ENCODE measurements at regions of chr1 and their contacts with region 1.

Region 1: GRCh38 chr1:226547754-226548191 is 791 bp upstream of the STUM start:
- DNase-seq: peak; percentile 82 to 90 (median 84)
- H3K4me3 ChIP-seq: peak overlapping the region; percentile 61
- H3K27ac ChIP-seq: no peak overlapping the region
- H3K4me1 ChIP-seq: peaks cover 5% of the 10 kb centered on the region
- H3K27me3 ChIP-seq: no peaks in the 10 kb centered on the region
- CTCF ChIP-seq: peak; percentile 81 to 88 (median 86)
- EP300 ChIP-seq: no peak
- POLR2A ChIP-seq: no peak

Region 2: DNA sequence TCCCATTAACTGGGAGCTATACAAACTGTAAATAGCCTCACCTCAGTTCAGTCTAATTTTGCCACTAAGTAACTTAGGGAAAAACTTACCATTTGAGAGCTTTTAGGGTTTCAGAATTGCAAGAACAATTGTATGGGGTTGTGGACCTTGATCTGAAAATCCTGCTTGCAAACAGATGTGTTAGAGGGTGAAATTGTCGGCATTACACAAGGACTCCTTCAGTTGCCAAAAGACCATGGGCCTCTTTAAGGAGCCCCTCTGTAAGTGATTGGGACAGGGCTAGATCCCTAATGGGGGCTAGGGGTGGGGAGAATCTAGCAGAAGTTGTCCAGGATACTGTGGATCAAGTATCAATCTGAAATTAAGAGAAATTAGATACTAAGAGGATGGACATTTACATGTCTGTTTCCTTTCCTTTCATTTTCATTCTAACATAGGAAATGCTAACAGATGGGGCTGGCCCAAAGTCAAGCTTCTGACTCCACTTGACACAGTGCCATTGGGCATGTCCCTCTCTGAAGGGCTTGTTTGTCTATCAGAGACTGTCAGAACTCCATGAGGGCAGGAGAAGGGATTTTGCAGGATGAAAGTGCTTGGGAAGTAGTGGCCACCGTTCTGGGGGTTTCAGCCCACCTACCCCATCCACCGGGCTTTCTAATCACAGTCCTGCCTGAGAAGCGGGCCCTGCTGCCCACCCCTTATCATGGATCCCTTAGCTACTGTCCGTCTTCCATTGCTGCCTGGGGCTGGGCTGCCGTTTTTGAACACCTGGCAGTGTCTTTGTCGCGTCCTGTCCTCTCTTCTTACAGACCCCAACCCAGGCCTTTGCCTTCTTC is 55.5 kb after region 1 on chr1:
- intact Hi-C with region 1: loop called in 3 of 4 experiments (anchors 5 kb)
- DNase-seq: peak in 4 of 5 donors; percentile 49 to 75 (median 58)
- H3K4me3 ChIP-seq: no peak overlapping the region
- H3K27ac ChIP-seq: peak overlapping the region in 1 of 2 donors; percentile 75
- H3K4me1 ChIP-seq: peaks cover 16% of the 10 kb centered on the region
- H3K27me3 ChIP-seq: no peaks in the 10 kb centered on the region
- CTCF ChIP-seq: no peak
- EP300 ChIP-seq: no peak
- POLR2A ChIP-seq: no peak

Region 3: DNA sequence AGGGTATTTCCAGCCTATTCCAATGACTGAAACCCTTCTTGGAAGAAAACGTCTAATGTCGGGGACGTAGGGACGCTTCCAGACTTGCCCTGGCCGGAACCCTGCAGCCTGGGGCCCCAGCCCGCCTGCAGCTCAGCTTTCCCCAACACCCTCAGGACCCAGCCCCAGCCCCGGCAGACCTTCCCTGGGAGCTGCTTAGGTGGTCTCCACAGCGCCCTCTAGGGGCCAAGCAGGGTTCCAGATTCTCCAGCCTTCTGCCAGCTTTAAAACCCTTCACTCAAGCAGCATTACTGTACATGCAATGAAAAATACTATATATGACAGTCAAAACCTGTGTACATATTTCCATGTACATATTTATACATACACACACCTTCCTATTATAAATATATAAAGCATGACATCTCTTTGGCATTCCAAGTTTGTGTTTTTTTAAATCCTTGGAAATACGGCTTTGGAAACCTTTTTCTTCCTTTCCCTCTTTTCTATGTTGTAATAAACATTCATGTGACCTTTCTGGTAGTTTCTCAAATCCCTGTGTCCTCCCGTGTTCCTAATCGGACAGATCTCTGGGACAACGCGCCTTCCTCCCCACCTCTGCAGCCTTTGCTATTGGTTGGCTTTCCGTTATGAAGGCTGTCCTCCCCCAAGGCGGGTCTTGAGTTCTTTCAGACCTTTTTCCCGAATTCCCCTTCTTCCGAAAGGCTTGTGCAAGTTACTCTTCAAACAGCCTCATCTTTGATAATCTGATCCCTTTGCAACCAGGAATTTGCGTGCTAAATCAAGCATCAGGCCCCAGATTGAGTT is 61.1 kb after region 1 on chr1:
- intact Hi-C with region 1: loop called (anchors 5 kb)
- DNase-seq: peak in 4 of 5 donors; percentile 59 to 74 (median 68)
- H3K4me3 ChIP-seq: no peak overlapping the region
- H3K27ac ChIP-seq: no peak overlapping the region
- H3K4me1 ChIP-seq: peaks cover 9% of the 10 kb centered on the region
- H3K27me3 ChIP-seq: no peaks in the 10 kb centered on the region
- CTCF ChIP-seq: peak; percentile 35 to 61 (median 51)
- EP300 ChIP-seq: no peak
- POLR2A ChIP-seq: no peak

Region 4: GRCh38 chr1:226634166-226634588 is 86.4 kb after region 1 on chr1:
- intact Hi-C with region 1: loop called in 1 of 4 experiments (anchors 5 kb)
- DNase-seq: peak; percentile 76 to 90 (median 87)
- H3K4me3 ChIP-seq: no peak overlapping the region
- H3K27ac ChIP-seq: no peak overlapping the region
- H3K4me1 ChIP-seq: peaks cover 4% of the 10 kb centered on the region
- H3K27me3 ChIP-seq: no peaks in the 10 kb centered on the region
- CTCF ChIP-seq: peak; percentile 82 to 90 (median 88)
- EP300 ChIP-seq: no peak
- POLR2A ChIP-seq: no peak

Region 5: GRCh38 chr1:226827968-226828513 is 280.3 kb after region 1 on chr1:
- intact Hi-C with region 1: loop called (anchors 5 to 10 kb)
- DNase-seq: peak; percentile 95 to 98 (median 97)
- H3K4me3 ChIP-seq: no peak overlapping the region
- H3K27ac ChIP-seq: peak overlapping the region; percentile 15 to 69
- H3K4me1 ChIP-seq: no peaks in the 10 kb centered on the region
- H3K27me3 ChIP-seq: no peaks in the 10 kb centered on the region
- CTCF ChIP-seq: peak; percentile 78 to 93 (median 88)
- EP300 ChIP-seq: no peak
- POLR2A ChIP-seq: no peak

Region 6: DNA sequence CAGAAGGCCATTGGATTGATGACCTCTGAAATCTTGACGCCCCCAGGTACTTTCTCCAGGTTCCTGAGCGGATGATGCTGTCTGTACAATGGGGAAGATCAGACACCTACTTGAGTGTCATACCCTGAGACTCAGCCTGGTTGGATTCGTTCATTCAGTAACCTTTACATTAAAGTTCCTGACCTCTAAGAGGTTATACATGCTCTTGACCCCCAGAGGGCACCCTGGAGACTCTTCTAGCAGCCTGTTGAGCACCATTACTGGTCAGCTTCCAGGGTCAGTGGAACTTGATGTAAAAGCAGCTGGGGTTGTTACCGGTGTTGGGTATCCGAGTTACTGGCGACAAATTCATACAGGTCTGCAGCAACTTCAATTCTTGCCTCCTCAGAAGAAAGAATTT is 901.3 kb after region 1 on chr1:
- intact Hi-C with region 1: loop called in 1 of 4 experiments (anchors 10 kb)
- DNase-seq: no peak
- H3K4me3 ChIP-seq: no peak overlapping the region
- H3K27ac ChIP-seq: no peak overlapping the region
- H3K4me1 ChIP-seq: no peaks in the 10 kb centered on the region
- H3K27me3 ChIP-seq: no peaks in the 10 kb centered on the region
- CTCF ChIP-seq: no peak
- EP300 ChIP-seq: no peak
- POLR2A ChIP-seq: no peak

Measured in ovary (tissue), 10 donors.